Vagina (tissue), 2 donors: ENCODE measurements at regions of chr12 and their contacts with region 1.

Region 1: DNA sequence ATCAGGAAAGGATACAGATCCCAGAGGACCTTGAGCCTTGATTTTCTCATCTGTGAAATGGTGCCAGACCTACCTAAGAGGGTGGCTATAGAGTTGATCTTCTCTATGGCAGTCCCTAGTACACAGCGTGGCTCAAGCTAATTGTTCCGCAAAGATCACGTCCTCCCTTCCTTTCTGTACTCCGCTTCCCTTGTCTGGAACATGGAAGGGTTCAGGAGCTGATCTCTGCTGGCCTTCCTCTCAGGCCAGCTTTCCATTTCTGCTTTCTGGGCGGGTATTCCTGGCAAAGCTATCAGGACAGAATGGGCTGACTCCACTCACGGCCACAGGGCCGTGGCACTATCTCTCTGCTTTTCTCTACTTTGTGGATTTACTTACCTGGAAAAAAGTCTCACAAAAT is 6.5 kb downstream of the CAMKK2 start:
- DNase-seq: no peak
- H3K4me3 ChIP-seq: no peak overlapping the region
- H3K27ac ChIP-seq: peak overlapping the region; percentile 70
- H3K4me1 ChIP-seq: peaks cover 42% of the 10 kb centered on the region
- H3K27me3 ChIP-seq: no peaks in the 10 kb centered on the region
- CTCF ChIP-seq: no peak
- POLR2A ChIP-seq: no peak

Region 2: DNA sequence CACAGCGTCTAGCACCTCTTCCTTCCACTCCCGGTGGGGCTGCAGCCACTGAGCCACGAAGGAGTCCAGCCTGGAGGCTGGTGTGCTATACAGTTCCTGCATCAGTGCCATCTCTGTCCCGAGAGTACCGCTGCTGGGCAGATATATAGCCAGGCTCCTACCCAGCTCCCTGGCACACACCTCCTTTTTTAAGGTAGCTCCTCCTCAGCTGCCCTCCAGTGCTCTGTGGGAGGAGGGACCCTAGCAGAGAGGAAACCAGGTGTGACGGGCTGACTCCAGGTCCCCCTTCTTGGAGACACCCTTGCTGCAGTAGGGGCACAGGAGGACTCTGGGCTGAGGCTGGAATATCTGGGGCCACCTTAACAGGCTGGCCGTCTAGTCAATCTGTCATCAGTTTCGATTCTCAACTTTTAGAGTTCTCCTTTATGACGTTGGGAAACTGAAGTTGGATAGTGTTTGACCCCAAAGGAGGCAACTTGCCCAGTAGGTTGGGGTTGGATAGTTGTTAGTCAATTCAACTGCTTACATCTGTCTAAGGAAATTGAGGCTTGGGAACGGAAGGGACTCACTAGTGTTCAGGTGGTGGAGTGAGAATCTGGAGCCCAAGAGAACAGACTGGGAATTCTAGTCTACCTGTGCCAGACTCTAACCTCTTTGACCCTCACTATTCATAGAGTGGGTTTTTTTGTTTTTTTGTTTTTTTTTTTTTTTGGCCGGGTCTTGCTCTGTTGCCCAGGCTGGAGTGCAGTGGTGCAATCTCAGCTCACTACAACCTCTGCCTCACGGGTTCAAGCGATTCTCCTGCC is 250.9 kb before region 1 on chr12 and contains the start of gene OASL:
- intact Hi-C with region 1: no loop called
- DNase-seq: no peak
- H3K4me3 ChIP-seq: peak within 1 kb of the TSS; percentile 38 to 46
- H3K27ac ChIP-seq: no peak within 1 kb of the TSS
- H3K4me1 ChIP-seq: peaks cover 12% of the 10 kb centered on the region
- H3K27me3 ChIP-seq: no peaks in the 10 kb centered on the region
- CTCF ChIP-seq: no peak
- POLR2A ChIP-seq: no peak
- total RNA-seq, gene OASL: 0.98 TPM

Region 3: DNA sequence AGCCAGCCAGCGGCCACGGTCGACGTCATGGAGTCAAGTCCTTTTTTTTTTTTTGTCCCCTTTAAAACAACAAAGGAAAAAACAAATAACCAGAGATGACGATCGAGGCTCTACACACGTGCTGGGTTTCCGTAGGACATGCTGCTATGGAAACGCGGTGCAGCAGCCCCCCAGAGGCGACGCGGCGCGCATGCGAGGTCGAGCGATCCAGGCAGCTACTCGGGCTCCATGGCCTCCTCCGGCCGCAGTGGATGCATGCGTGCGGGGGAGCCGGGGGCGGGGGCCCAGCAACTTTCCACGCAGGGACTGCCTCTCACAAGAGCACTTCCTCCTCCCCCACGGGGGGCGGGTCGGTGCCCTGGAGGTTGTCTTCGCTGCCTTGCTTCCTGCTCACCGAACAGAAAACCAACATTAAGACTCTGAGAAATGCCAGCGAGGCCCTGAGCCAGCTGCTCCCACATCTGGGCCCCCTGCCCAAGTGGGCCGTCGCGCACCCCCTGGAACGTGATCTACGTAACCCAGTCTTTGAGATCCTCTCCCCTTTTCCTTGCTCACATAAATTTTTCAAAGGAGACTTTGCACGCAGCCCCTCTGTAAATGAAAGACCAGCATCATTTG is 49.4 kb before region 1 on chr12:
- intact Hi-C with region 1: loop called (anchors 5 kb)
- DNase-seq: no peak
- H3K4me3 ChIP-seq: peak overlapping the region; percentile 33 to 44
- H3K27ac ChIP-seq: peak overlapping the region; percentile 83
- H3K4me1 ChIP-seq: peaks cover 24% of the 10 kb centered on the region
- H3K27me3 ChIP-seq: no peaks in the 10 kb centered on the region
- CTCF ChIP-seq: no peak
- POLR2A ChIP-seq: no peak